ENCODE measurements at regions of chr22 and their contacts with region 1.

Region 1: GRCh38 chr22:36350751-36351594 is 36.8 kb downstream of the MYH9 start:
- DNase-seq: no peak
- ATAC-seq: no peak
- H3K4me3 ChIP-seq: no peak overlapping the region
- H3K4me3 Mint-ChIP-seq: peak overlapping the region; percentile 58 to 98 (median 58)
- H3K27ac ChIP-seq: peak overlapping the region; percentile 70
- H3K27ac Mint-ChIP-seq: peak overlapping the region; percentile 92 to 94
- H3K4me1 ChIP-seq: peaks cover 40 to 95% of the 10 kb centered on the region in 2 experiments
- H3K4me1 Mint-ChIP-seq: peaks cover 89 to 92% (median 91%) of the 10 kb centered on the region in 3 donors
- H3K27me3 ChIP-seq: no peaks in the 10 kb centered on the region
- H3K27me3 Mint-ChIP-seq: no peaks in the 10 kb centered on the region

Region 2: GRCh38 chr22:36387752-36388518 is 37.0 kb after region 1 on chr22 and contains the start of gene MYH9:
- CTCF ChIA-PET with region 1: interaction called in 1 of 2 experiments, 3 read pairs
- POLR2A ChIA-PET with region 1: interaction called, 5 to 12 read pairs
- DNase-seq: peak; percentile 95 to 99 (median 98)
- ATAC-seq: peak; percentile 83 to 89 (median 85)
- H3K4me3 ChIP-seq: peak within 1 kb of the TSS; percentile 86 to 97
- H3K4me3 Mint-ChIP-seq: peak within 1 kb of the TSS; percentile 88 to 98 (median 95)
- H3K27ac ChIP-seq: peak within 1 kb of the TSS; percentile 79
- H3K27ac Mint-ChIP-seq: peak within 1 kb of the TSS; percentile 89 to 98
- H3K4me1 ChIP-seq: peaks cover 12 to 37% of the 10 kb centered on the region in 2 experiments
- H3K4me1 Mint-ChIP-seq: peaks cover 26 to 48% (median 41%) of the 10 kb centered on the region in 3 donors
- H3K27me3 ChIP-seq: no peaks in the 10 kb centered on the region
- H3K27me3 Mint-ChIP-seq: no peaks in the 10 kb centered on the region
- total RNA-seq, gene MYH9: 816 to 1,109 (median 896) TPM

Region 3: GRCh38 chr22:36409911-36410756 is 59.2 kb after region 1 on chr22:
- CTCF ChIA-PET with region 1: no interaction called
- POLR2A ChIA-PET with region 1: no interaction called
- DNase-seq: peak; percentile 41 to 78 (median 67)
- ATAC-seq: peak; percentile 58 to 85 (median 70)
- H3K4me3 ChIP-seq: peak overlapping the region; percentile 25 to 34
- H3K4me3 Mint-ChIP-seq: peak overlapping the region; percentile 65 to 77 (median 70)
- H3K27ac ChIP-seq: peak overlapping the region; percentile 77
- H3K27ac Mint-ChIP-seq: peak overlapping the region; percentile 86 to 96
- H3K4me1 ChIP-seq: peaks cover 17 to 65% of the 10 kb centered on the region in 2 experiments
- H3K4me1 Mint-ChIP-seq: peaks cover 51 to 64% (median 53%) of the 10 kb centered on the region in 3 donors
- H3K27me3 ChIP-seq: no peaks in the 10 kb centered on the region
- H3K27me3 Mint-ChIP-seq: no peaks in the 10 kb centered on the region

Measured in T-cell (primary cell).